Activated CD4-positive, alpha-beta T cell treated with anti-CD3 and anti-CD28 coated beads for 36 hours (primary cell): ENCODE measurements at regions of chr11 and their contacts with region 1.

Region 1: GRCh38 chr11:61627567-61628445 is 46.9 kb upstream of the SYT7 start:
- DNase-seq: peak; percentile 74
- ATAC-seq: peak; percentile 84
- H3K4me3 Mint-ChIP-seq: no peak overlapping the region
- H3K27ac Mint-ChIP-seq: no peak overlapping the region
- H3K4me1 Mint-ChIP-seq: no peaks in the 10 kb centered on the region
- H3K27me3 Mint-ChIP-seq: peaks cover 5% of the 10 kb centered on the region

Region 2: DNA sequence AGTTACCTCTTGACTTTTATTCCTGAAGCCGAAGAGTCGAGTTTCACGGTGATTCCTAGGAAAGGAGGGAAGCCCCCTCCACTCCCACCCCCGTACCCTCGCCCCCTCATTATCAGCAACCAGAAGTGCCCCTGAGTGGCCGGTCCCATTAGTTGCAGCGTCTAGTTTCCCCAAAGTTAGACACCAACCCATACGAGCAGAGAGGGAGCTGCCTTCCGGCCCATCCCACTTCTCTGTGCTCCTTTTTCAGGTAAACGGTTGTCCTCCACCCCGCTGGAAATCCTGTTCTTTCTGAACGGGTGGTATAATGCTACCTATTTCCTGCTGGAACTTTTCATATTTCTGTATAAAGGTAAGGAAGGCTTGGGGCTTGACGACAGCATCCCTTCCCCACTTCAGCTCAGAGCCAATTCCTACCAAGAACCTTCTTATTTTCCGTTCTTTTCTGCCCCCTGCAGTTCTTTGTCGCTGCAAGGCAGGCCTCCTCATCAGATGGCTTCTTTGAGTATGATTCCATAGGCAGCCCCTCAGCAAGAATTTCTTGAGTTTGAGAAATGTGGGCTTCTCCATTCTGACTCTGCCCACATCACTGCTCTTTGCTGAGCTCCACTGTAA is 234.7 kb before region 1 on chr11:
- CTCF ChIA-PET with region 1: no interaction called
- POLR2A ChIA-PET with region 1: no interaction called
- intact Hi-C with region 1: no loop called
- DNase-seq: peak; percentile 35
- ATAC-seq: peak; percentile 50
- H3K4me3 Mint-ChIP-seq: peak overlapping the region; percentile 84
- H3K27ac Mint-ChIP-seq: peak overlapping the region; percentile 87
- H3K4me1 Mint-ChIP-seq: peaks cover 19% of the 10 kb centered on the region
- H3K27me3 Mint-ChIP-seq: no peaks in the 10 kb centered on the region

Region 3: GRCh38 chr11:61439615-61440014 is 188.2 kb before region 1 on chr11:
- CTCF ChIA-PET with region 1: no interaction called
- POLR2A ChIA-PET with region 1: no interaction called
- intact Hi-C with region 1: no loop called
- DNase-seq: no peak
- ATAC-seq: no peak
- H3K4me3 Mint-ChIP-seq: no peak overlapping the region
- H3K27ac Mint-ChIP-seq: no peak overlapping the region
- H3K4me1 Mint-ChIP-seq: peaks cover 24% of the 10 kb centered on the region
- H3K27me3 Mint-ChIP-seq: no peaks in the 10 kb centered on the region

Region 4: DNA sequence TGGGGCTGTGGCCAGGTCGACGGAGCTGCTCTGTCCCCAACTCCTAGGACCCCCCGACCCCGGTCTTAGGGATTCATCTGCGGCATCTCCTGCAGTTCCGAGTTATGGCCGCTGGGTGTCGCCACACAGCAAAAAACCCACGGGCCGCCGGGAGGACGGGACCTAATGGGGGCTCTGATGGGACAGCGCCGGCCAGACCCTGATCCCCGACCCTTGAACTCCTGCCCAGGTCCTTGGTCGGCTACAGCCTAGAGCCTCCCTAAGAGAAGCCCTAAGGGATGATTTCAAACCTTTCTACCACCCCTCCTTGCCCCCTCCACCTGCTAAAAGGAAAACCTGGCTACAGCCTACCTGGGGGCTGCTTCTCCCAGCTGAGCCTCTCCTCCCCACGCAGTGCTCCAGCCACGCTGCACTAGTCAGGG is 150.1 kb before region 1 on chr11:
- CTCF ChIA-PET with region 1: interaction called, 3 read pairs
- POLR2A ChIA-PET with region 1: no interaction called
- intact Hi-C with region 1: loop called in 1 of 2 experiments (anchors 1 kb)
- DNase-seq: peak; percentile 70
- ATAC-seq: peak; percentile 56
- H3K4me3 Mint-ChIP-seq: no peak overlapping the region
- H3K27ac Mint-ChIP-seq: no peak overlapping the region
- H3K4me1 Mint-ChIP-seq: peaks cover 9% of the 10 kb centered on the region
- H3K27me3 Mint-ChIP-seq: no peaks in the 10 kb centered on the region

Region 5: DNA sequence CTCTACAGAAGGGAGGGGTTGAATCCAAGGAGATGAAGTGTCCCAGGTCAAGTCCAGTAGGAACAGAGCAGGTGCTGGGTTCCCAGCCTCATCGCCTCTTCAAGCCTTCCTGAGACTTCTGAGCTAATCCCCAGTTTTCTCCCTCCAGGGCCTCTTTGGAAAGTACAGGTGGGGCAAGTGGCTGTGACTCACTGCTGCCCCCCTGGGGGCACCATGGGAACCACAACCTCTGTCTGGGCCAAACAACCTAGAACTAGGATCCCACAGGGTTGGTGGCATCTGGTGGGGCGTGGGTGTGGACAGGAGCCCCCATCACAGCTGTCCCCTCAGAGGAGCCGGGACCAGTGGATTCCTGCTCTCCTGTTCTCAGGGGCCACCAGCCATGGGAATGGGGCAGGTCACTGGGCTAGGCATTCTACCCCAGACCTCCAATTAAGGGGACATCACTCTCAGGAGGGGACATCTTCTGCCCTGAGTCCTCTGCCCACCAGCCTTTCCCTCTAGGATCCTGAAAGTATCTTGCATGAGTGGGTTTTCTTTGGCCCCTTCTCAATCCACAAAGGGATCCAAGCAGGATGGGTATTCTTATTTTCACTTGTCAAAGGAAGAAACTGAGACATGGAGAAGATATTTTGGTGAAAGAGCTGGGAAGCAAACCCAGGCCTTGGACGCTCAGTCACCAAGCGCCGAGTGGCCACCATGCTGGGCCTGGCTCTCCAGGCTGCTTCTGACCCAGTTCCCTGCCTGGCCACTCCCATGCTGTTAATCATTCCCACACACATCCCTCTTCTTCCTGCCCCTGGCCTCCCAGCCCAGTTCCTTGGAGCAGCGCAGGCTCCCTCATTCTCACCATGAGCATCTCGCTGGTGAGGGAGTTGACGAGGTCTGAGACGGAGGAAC is 95.4 kb before region 1 on chr11:
- CTCF ChIA-PET with region 1: interaction called, 3 read pairs
- POLR2A ChIA-PET with region 1: no interaction called
- intact Hi-C with region 1: loop called in 1 of 2 experiments (anchors 1 kb)
- DNase-seq: peak; percentile 66
- ATAC-seq: peak; percentile 86
- H3K4me3 Mint-ChIP-seq: no peak overlapping the region
- H3K27ac Mint-ChIP-seq: no peak overlapping the region
- H3K4me1 Mint-ChIP-seq: no peaks in the 10 kb centered on the region
- H3K27me3 Mint-ChIP-seq: peaks cover 8% of the 10 kb centered on the region

Region 6: DNA sequence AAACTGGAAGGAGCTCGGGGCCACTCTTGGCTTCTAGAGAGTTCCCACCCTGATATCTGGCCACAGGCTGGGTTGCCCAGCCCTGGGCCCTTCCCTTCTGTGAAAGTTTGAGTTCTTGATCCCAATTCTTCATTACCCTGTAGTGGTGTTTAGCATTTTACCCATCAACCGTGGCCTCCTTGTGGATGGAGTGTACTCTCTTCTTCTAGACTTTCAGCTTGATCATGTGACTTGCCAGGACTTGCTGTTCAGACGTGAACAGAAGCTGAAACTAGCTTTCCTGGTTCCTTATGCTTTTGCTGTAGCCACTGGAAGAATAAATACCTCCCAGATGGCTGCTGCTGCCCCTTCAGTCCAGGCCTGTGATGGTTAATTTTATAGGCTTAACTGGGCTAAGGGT is 19.7 kb after region 1 on chr11:
- CTCF ChIA-PET with region 1: no interaction called
- POLR2A ChIA-PET with region 1: no interaction called
- intact Hi-C with region 1: no loop called
- DNase-seq: no peak
- ATAC-seq: no peak
- H3K4me3 Mint-ChIP-seq: no peak overlapping the region
- H3K27ac Mint-ChIP-seq: no peak overlapping the region
- H3K4me1 Mint-ChIP-seq: no peaks in the 10 kb centered on the region
- H3K27me3 Mint-ChIP-seq: peaks cover 2% of the 10 kb centered on the region

Region 7: DNA sequence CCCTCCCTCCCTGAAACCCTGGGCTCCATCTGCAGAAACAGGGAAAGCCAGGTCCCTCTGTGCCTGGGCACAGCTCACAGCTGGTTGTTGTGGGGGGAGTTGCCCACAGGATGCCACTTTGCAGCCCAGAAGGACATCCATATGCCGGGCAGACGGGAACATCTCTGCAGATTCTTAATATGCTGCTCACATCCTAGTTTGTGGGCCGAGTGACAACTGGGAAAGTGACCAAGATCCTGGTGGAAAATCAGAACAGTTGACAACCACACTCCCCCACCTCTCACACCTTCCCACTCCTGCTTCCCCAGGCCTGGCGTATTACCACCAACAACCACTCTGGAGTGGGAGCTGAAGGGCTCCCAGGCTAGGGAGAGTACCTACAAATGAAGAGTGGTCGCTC is 783.7 kb after region 1 on chr11:
- CTCF ChIA-PET with region 1: no interaction called
- POLR2A ChIA-PET with region 1: no interaction called
- intact Hi-C with region 1: no loop called
- DNase-seq: no peak
- ATAC-seq: no peak
- H3K4me3 Mint-ChIP-seq: no peak overlapping the region
- H3K27ac Mint-ChIP-seq: no peak overlapping the region
- H3K4me1 Mint-ChIP-seq: no peaks in the 10 kb centered on the region
- H3K27me3 Mint-ChIP-seq: no peaks in the 10 kb centered on the region